Activated CD4-positive, alpha-beta T cell treated with anti-CD3 and anti-CD28 coated beads, Interleukin-2, amount 10 ng/mL, durations not matched to agents 24 days and 14 days (primary cell): ENCODE measurements at regions of chr7 and their contacts with region 1.

Region 1: GRCh38 chr7:131027287-131027773 is 293.3 kb upstream of the KLF14 start:
- DNase-seq: peak; percentile 76
- H3K4me3 Mint-ChIP-seq: peak overlapping the region; percentile 40
- H3K27ac Mint-ChIP-seq: peak overlapping the region; percentile 83
- H3K4me1 Mint-ChIP-seq: peaks cover 56% of the 10 kb centered on the region
- H3K27me3 Mint-ChIP-seq: no peaks in the 10 kb centered on the region

Region 2: GRCh38 chr7:129037585-129037984 is 1989.7 kb before region 1 on chr7:
- intact Hi-C with region 1: no loop called
- DNase-seq: no peak
- H3K4me3 Mint-ChIP-seq: no peak overlapping the region
- H3K27ac Mint-ChIP-seq: no peak overlapping the region
- H3K4me1 Mint-ChIP-seq: peaks cover 15% of the 10 kb centered on the region
- H3K27me3 Mint-ChIP-seq: no peaks in the 10 kb centered on the region

Region 3: GRCh38 chr7:130721486-130722280 is 305.6 kb before region 1 on chr7:
- intact Hi-C with region 1: no loop called
- DNase-seq: peak; percentile 60
- H3K4me3 Mint-ChIP-seq: no peak overlapping the region
- H3K27ac Mint-ChIP-seq: no peak overlapping the region
- H3K4me1 Mint-ChIP-seq: no peaks in the 10 kb centered on the region
- H3K27me3 Mint-ChIP-seq: peaks cover 19% of the 10 kb centered on the region

Region 4: GRCh38 chr7:130752424-130752823 is 274.9 kb before region 1 on chr7:
- intact Hi-C with region 1: no loop called
- DNase-seq: no peak
- H3K4me3 Mint-ChIP-seq: no peak overlapping the region
- H3K27ac Mint-ChIP-seq: no peak overlapping the region
- H3K4me1 Mint-ChIP-seq: no peaks in the 10 kb centered on the region
- H3K27me3 Mint-ChIP-seq: peaks cover 33% of the 10 kb centered on the region

Region 5: DNA sequence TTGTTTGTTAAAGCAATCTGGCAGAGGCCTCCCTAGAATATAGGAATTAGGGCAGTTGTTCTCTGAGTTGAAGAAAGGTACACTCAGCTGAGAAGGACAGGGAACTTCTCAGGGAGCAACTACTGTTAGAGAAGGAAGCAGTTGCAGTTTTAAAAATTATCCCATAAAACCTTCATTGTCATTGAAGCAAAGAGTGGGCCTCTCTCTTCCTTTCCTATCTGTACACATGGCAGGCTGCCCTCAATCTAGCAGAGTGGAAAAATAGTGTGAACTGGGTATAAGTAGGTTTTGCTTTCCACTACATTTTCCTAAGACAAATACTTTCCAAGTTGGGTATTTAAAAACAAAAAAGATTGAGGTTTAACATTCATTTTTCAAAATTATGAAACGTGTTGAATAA is 56.6 kb before region 1 on chr7:
- intact Hi-C with region 1: loop called (anchors 1 kb)
- DNase-seq: no peak
- H3K4me3 Mint-ChIP-seq: peak overlapping the region; percentile 64
- H3K27ac Mint-ChIP-seq: peak overlapping the region; percentile 96
- H3K4me1 Mint-ChIP-seq: peaks cover 57% of the 10 kb centered on the region
- H3K27me3 Mint-ChIP-seq: no peaks in the 10 kb centered on the region

Region 6: DNA sequence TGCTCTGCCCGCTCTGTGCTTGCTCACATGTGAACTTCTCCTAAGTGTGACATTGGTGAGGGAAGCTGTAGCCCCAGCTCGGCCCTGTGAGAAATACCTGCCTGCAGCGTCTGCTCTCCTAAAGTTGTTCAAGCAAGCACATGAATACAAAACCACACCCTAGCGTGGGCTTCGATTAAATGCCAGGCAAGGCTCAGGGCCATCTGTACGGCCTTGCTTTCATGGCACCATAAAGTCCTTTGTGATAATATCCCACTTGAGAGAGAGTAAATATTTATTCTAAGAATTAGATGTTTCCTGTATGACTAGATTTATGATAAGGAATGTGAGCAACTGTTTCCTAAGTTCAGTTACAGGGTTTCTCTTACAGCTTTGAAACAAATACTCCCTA is 30.5 kb before region 1 on chr7:
- intact Hi-C with region 1: loop called (anchors 5 kb)
- DNase-seq: peak; percentile 73
- H3K4me3 Mint-ChIP-seq: peak overlapping the region; percentile 70
- H3K27ac Mint-ChIP-seq: peak overlapping the region; percentile 91
- H3K4me1 Mint-ChIP-seq: peaks cover 56% of the 10 kb centered on the region
- H3K27me3 Mint-ChIP-seq: no peaks in the 10 kb centered on the region

Region 7: DNA sequence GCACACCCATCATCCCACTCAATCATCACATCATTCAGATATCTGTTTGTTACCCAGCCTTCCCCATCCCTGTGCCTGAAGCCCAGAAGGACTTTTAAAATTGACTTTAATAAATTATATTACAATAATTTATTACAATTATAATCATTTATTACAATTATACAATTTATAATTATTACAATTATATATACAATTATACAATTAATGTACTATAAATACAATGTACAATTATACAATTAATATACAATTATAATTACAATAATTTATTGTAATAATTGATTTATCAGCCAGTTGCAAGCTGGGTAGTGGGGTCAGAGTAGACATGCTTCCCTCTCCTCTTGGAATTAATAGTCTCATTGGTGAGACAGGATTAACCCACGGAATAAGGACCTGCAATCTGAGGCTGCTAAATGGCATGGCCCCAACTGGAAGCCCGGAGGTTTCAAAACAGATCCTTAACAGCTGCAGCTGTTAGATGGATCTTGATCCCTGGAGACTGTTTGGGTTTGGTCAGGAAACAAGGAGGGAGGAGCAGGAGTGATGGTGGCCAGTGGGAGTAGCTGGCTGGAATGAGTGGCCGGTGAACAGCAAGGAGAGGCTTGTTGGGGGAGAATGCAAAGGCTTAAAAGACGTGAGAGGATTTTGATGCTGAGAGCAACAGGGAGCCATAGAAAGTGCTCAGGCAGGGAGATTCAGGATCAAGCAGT is 931.9 kb after region 1 on chr7:
- intact Hi-C with region 1: no loop called
- DNase-seq: no peak
- H3K4me3 Mint-ChIP-seq: no peak overlapping the region
- H3K27ac Mint-ChIP-seq: no peak overlapping the region
- H3K4me1 Mint-ChIP-seq: no peaks in the 10 kb centered on the region
- H3K27me3 Mint-ChIP-seq: peaks cover under 1% of the 10 kb centered on the region